ENCODE measurements at regions of chr20 and their contacts with region 1.

Region 1: DNA sequence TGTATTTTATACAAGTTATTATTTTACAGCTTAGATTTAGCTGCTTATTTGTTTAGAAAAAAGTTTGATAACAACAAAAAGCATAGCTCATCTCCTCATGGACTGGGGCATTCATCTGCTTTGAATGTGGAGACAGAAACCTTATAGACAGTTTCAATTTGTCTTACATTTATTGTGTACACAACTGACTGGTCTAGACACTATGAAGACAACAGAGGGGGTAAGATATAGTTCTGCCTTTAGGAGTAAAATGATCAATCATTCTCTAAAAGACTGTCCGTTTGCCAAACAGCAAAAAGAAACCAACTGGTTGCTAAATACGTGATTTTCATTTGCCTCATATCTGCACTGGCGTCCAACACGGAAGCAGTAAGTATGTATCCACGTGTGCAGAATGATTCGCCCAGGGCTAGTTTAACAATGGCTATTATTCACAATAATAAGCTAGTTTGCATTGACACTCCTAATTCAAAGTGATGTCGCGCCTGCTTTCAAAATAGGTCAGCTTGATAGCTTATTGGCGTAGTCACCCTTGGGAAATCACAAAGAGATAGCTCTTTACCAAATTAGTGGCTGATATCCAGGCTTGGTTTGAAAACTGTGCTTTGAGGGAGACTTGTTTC is 153.6 kb downstream of the BMP2 start:
- DNase-seq: no peak
- H3K4me3 ChIP-seq: no peak overlapping the region
- H3K27ac ChIP-seq: no peak overlapping the region
- H3K4me1 ChIP-seq: no peaks in the 10 kb centered on the region
- H3K27me3 ChIP-seq: no peaks in the 10 kb centered on the region
- CTCF ChIP-seq: no peak
- EP300 ChIP-seq: no peak
- POLR2A ChIP-seq: no peak

Region 2: GRCh38 chr20:6053776-6054688 is 867.1 kb before region 1 on chr20 and contains the start of gene LRRN4:
- in situ Hi-C with region 1: no loop called
- intact Hi-C with region 1: no loop called
- DNase-seq: no peak
- H3K4me3 ChIP-seq: no peak within 1 kb of the TSS
- H3K27ac ChIP-seq: no peak within 1 kb of the TSS
- H3K4me1 ChIP-seq: peaks cover 0 to 19% (median 12%) of the 10 kb centered on the region in 4 donors
- H3K27me3 ChIP-seq: peaks cover 45% of the 10 kb centered on the region
- CTCF ChIP-seq: no peak
- EP300 ChIP-seq: no peak
- POLR2A ChIP-seq: no peak
- total RNA-seq, gene LRRN4: 0.48 TPM in 1 of 4 donors, not detected in the others

Region 3: GRCh38 chr20:6735942-6736845 is 184.9 kb before region 1 on chr20:
- in situ Hi-C with region 1: no loop called
- intact Hi-C with region 1: no loop called
- DNase-seq: no peak
- H3K4me3 ChIP-seq: no peak overlapping the region
- H3K27ac ChIP-seq: peak overlapping the region in 1 of 4 donors; percentile 25
- H3K4me1 ChIP-seq: peaks cover 0 to 8% (median 0%) of the 10 kb centered on the region in 4 donors
- H3K27me3 ChIP-seq: no peaks in the 10 kb centered on the region
- CTCF ChIP-seq: no peak
- EP300 ChIP-seq: no peak
- POLR2A ChIP-seq: no peak

Region 4: DNA sequence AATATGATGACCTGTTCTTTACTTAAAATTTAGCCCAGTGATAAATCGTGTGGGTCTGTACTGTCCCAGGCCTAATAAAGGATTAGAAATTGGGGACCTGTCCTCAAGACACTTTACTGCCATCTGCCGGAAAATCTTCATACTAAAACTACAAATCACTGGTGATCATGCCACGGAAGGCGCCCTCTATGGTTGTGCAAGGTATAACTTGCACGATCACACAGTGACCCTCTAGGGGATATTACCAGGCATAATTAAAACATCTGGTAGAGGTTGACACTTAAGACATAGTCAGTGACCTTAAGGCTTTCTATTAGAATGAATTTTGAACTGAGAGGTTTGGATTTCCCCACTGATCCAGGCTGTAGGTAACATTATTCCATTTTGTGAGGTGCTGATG is 18.9 kb after region 1 on chr20:
- in situ Hi-C with region 1: no loop called
- intact Hi-C with region 1: no loop called
- DNase-seq: no peak
- H3K4me3 ChIP-seq: no peak overlapping the region
- H3K27ac ChIP-seq: no peak overlapping the region
- H3K4me1 ChIP-seq: no peaks in the 10 kb centered on the region
- H3K27me3 ChIP-seq: no peaks in the 10 kb centered on the region
- CTCF ChIP-seq: no peak
- EP300 ChIP-seq: no peak
- POLR2A ChIP-seq: no peak

Region 5: GRCh38 chr20:6959900-6960312 is 38.8 kb after region 1 on chr20:
- in situ Hi-C with region 1: no loop called
- intact Hi-C with region 1: loop called (anchors 1 kb)
- DNase-seq: no peak
- H3K4me3 ChIP-seq: no peak overlapping the region
- H3K27ac ChIP-seq: no peak overlapping the region
- H3K4me1 ChIP-seq: peaks cover 0 to 9% (median 2%) of the 10 kb centered on the region in 4 donors
- H3K27me3 ChIP-seq: no peaks in the 10 kb centered on the region
- CTCF ChIP-seq: no peak
- EP300 ChIP-seq: no peak
- POLR2A ChIP-seq: no peak